SK-N-SH (cell line): ENCODE measurements at regions of chr6 and their contacts with region 1.

Region 1: GRCh38 chr6:90940812-90941481 is 354.1 kb upstream of the MAP3K7 start:
- DNase-seq: peak; percentile 45
- H3K4me3 ChIP-seq: peak overlapping the region; percentile 22 to 25; a peak in 1 of 4 replicates
- H3K27ac ChIP-seq: no peak overlapping the region
- H3K4me1 ChIP-seq: no peaks in the 10 kb centered on the region
- H3K27me3 ChIP-seq: 0 out of 2 replicates have a peak, but pooled peaks cover 5% of the 10 kb centered on the region
- CTCF ChIP-seq: peak; percentile 70
- EP300 ChIP-seq: no peak
- RAD21 ChIP-seq: peak; percentile 72

Region 2: GRCh38 chr6:90925726-90926125 is 15.2 kb before region 1 on chr6:
- CTCF ChIA-PET with region 1: interaction called, 12 read pairs
- POLR2A ChIA-PET with region 1: no interaction called
- DNase-seq: no peak
- H3K4me3 ChIP-seq: no peak overlapping the region
- H3K27ac ChIP-seq: no peak overlapping the region
- H3K4me1 ChIP-seq: no peaks in the 10 kb centered on the region
- H3K27me3 ChIP-seq: no peaks in the 10 kb centered on the region
- CTCF ChIP-seq: no peak
- EP300 ChIP-seq: no peak
- RAD21 ChIP-seq: no peak

Region 3: DNA sequence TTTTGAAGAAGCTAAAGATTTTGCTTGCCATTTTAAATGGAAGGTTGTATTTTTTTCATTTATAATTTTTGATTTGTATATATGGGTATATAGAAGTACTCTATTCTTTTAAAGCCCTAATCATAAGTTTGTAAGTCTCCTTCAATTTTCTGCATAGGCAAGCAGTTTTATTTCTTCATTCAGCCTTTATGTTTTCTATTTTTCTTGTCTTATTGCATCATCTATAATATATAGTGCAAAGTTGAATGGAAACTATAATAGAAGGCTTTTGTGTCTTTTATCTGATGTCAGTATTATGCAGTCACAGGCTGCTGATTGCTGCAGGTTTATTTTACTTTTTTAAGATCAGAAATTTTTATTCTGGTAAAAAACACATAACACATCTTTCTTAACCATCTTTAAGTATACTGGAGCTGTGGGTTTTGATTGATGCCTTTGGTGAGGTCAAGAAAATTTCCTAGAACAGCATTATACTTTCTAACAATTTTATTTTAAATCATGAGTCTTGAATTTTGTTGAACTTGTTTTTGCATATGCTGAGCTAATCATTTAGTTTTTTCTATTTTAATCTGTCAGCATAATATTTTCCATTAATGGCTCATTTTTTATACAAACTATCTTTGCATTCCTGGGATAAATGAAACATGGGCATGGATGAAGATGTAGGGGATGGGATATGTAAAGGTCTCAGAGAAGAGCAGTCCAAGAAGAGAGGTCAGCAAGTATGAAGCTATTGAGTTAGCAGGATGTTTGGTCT is 12.6 kb after region 1 on chr6:
- CTCF ChIA-PET with region 1: interaction called, 10 read pairs
- POLR2A ChIA-PET with region 1: no interaction called
- DNase-seq: no peak
- H3K4me3 ChIP-seq: no peak overlapping the region
- H3K27ac ChIP-seq: no peak overlapping the region
- H3K4me1 ChIP-seq: no peaks in the 10 kb centered on the region
- H3K27me3 ChIP-seq: no peaks in the 10 kb centered on the region
- CTCF ChIP-seq: no peak
- EP300 ChIP-seq: no peak
- RAD21 ChIP-seq: no peak